ENCODE measurements at regions of chr2 and their contacts with region 1.

Region 1: DNA sequence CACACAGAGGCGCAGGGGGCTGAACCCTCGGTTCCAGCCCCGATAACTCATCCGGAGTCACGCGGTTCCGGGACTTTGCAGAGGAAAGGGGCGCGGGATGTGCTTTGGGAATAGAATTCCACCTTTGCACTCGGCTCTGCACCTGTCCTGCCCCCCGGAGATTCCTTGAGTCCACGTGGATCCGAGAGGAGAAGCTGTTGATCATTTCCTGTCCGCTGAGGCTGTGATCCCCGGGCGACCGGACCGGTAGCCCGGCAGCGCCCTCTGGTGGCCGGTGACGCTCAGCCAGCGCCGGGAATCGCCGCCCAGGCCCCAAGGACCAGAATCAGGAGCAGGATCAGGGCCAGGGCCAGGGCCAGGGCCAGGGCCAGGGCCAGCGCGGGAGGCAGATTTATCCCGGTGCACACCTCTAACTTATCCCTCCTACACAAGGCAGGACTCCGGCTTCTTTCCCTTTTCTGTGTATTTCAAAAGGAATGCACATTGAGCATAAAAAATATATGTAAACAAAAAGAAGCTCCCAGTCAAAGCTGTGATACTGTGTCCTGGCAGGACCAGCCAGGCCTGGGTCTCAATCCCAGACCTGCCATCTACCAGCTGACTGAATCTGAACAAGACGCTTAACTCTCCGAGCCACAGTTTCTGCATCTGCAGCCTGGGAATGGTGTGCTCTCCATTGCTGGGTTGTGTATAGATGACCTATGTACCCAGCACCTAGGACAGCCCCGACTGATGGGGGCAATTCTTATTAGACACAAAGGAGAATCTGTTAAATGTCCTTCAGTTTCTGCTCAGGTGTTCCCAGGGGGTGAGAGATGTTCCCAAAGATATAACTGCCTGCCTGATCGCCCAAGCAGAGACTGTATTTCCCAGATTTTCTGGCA is 8.5 kb upstream of the SPATA3 start:
- DNase-seq: peak; percentile 80
- ATAC-seq: peak; percentile 72
- H3K4me3 ChIP-seq: peak overlapping the region; percentile 2 to 59 (median 50)
- H3K4me3 Mint-ChIP-seq: peak overlapping the region; percentile 78
- H3K27ac ChIP-seq: no peak overlapping the region
- H3K27ac Mint-ChIP-seq: no peak overlapping the region
- H3K4me1 ChIP-seq: peaks cover 6 to 8% of the 10 kb centered on the region in 2 donors
- H3K4me1 Mint-ChIP-seq: peaks cover 6% of the 10 kb centered on the region
- H3K27me3 ChIP-seq: peaks cover 0 to 20% (median 2%) of the 10 kb centered on the region in 4 experiments
- H3K27me3 Mint-ChIP-seq: peaks cover 11% of the 10 kb centered on the region
- CTCF ChIP-seq: peak; percentile 96

Region 2: DNA sequence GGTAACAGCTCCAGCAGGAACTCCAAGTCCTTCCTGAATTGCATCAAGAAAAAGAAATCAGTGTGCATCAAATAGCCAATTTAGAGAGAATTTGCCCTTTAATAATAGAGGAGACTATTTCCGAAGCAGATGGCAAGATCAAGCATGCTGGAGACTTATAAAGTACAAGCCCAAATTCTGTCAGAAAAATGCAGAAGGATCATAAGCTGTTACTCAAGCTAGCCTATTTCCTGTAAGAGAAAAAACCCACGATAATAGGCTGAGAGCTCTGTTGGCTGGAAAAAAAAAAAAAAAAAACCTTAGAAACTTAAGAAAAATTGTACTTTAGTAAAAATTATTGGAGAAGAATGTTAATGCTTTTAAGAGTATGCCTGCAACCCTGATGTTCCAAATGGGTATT is 147.1 kb before region 1 on chr2:
- CTCF ChIA-PET with region 1: interaction called, 16 read pairs
- POLR2A ChIA-PET with region 1: interaction called, 3 read pairs
- intact Hi-C with region 1: no loop called
- DNase-seq: no peak
- ATAC-seq: no peak
- H3K4me3 ChIP-seq: no peak overlapping the region
- H3K4me3 Mint-ChIP-seq: no peak overlapping the region
- H3K27ac ChIP-seq: no peak overlapping the region
- H3K27ac Mint-ChIP-seq: no peak overlapping the region
- H3K4me1 ChIP-seq: no peaks in the 10 kb centered on the region
- H3K4me1 Mint-ChIP-seq: no peaks in the 10 kb centered on the region
- H3K27me3 ChIP-seq: peaks cover 0 to 2% (median 0%) of the 10 kb centered on the region in 4 experiments
- H3K27me3 Mint-ChIP-seq: peaks cover 21% of the 10 kb centered on the region
- CTCF ChIP-seq: no peak

Region 3: DNA sequence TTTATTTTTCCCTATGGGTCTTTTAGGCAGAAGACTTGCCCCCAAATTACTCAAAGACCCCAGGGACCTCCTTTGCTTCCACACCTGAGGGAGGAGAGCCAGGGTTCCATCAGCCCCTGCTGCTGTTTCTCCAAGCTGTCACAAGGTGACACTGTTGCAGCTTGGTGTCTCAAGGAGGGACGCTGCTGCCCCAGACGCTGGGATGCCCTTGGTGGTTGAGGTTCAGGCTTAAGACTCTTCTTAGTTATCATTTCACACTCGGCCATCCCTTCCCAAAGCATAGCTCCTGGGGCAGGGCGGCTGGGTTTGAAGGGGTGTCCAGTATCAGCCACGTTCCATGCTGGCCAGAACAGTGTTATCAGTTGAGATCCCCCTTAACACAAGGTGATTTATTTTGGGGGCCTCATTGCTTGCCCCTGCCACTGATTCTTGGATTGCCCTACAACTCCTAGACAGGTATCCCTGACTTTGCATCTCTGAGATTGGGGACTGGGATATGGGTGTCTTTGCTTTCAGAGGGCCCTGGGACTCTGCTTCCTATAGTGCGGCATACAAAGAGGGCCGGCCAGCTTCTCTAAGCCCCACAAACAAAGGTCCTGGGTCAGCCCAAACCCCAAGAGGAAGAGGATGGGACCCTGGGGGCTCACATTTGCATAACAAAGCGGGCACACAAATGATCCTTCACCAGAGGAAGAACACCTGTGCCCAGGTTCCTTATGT is 85.0 kb before region 1 on chr2:
- CTCF ChIA-PET with region 1: interaction called, 61 read pairs
- POLR2A ChIA-PET with region 1: interaction called, 3 read pairs
- intact Hi-C with region 1: loop called (anchors 1 kb)
- DNase-seq: peak; percentile 52
- ATAC-seq: peak; percentile 81
- H3K4me3 ChIP-seq: no peak overlapping the region
- H3K4me3 Mint-ChIP-seq: peak overlapping the region; percentile 32
- H3K27ac ChIP-seq: no peak overlapping the region
- H3K27ac Mint-ChIP-seq: peak overlapping the region; percentile 41
- H3K4me1 ChIP-seq: peaks cover 13 to 21% of the 10 kb centered on the region in 2 donors
- H3K4me1 Mint-ChIP-seq: peaks cover 14% of the 10 kb centered on the region
- H3K27me3 ChIP-seq: no peaks in the 10 kb centered on the region
- H3K27me3 Mint-ChIP-seq: no peaks in the 10 kb centered on the region
- CTCF ChIP-seq: peak; percentile 54

Region 4: GRCh38 chr2:230924470-230925341 is 62.7 kb before region 1 on chr2 and contains the start of gene GPR55:
- CTCF ChIA-PET with region 1: interaction called, 14 read pairs
- POLR2A ChIA-PET with region 1: no interaction called
- intact Hi-C with region 1: no loop called
- DNase-seq: peak; percentile 64
- ATAC-seq: peak; percentile 74
- H3K4me3 ChIP-seq: peak within 1 kb of the TSS in 4 of 5 experiments; percentile 39 to 60 (median 50)
- H3K4me3 Mint-ChIP-seq: peak within 1 kb of the TSS; percentile 85
- H3K27ac ChIP-seq: peak within 1 kb of the TSS; percentile 12 to 42
- H3K27ac Mint-ChIP-seq: peak within 1 kb of the TSS; percentile 85
- H3K4me1 ChIP-seq: peaks cover 3 to 24% of the 10 kb centered on the region in 2 donors
- H3K4me1 Mint-ChIP-seq: peaks cover 22% of the 10 kb centered on the region
- H3K27me3 ChIP-seq: peaks cover 0 to 4% (median 0%) of the 10 kb centered on the region in 4 experiments
- H3K27me3 Mint-ChIP-seq: no peaks in the 10 kb centered on the region
- CTCF ChIP-seq: peak; percentile 29
- total RNA-seq, gene GPR55: 4.1 and 4.7 TPM in 2 replicates

Region 5: GRCh38 chr2:231191896-231192872 is 204.8 kb after region 1 on chr2:
- CTCF ChIA-PET with region 1: no interaction called
- POLR2A ChIA-PET with region 1: no interaction called
- intact Hi-C with region 1: no loop called
- DNase-seq: no peak
- ATAC-seq: no peak
- H3K4me3 ChIP-seq: no peak overlapping the region
- H3K4me3 Mint-ChIP-seq: no peak overlapping the region
- H3K27ac ChIP-seq: no peak overlapping the region
- H3K27ac Mint-ChIP-seq: no peak overlapping the region
- H3K4me1 ChIP-seq: peaks cover 0 to 3% of the 10 kb centered on the region in 2 donors
- H3K4me1 Mint-ChIP-seq: peaks cover 2% of the 10 kb centered on the region
- H3K27me3 ChIP-seq: peaks cover 0 to 22% (median 3%) of the 10 kb centered on the region in 4 experiments
- H3K27me3 Mint-ChIP-seq: peaks cover 49% of the 10 kb centered on the region
- CTCF ChIP-seq: no peak